GM12878 (cell line): ENCODE measurements at regions of chr2 and their contacts with region 1.

Region 1: GRCh38 chr2:74020702-74021406 is 36.1 kb downstream of the TET3 start:
- DNase-seq: no peak
- ATAC-seq: peak; percentile 67
- H3K4me3 ChIP-seq: no peak overlapping the region
- H3K27ac ChIP-seq: peak overlapping the region; percentile 76
- H3K4me1 ChIP-seq: peaks cover 32% of the 10 kb centered on the region
- H3K27me3 ChIP-seq: no peaks in the 10 kb centered on the region
- CTCF ChIP-seq: 0 out of 6 replicates have a peak, but pooled peaks of 1 of the 3 experiments have one; percentile 0
- EP300 ChIP-seq: peak in 1 of 2 experiments; percentile 32; a peak in 1 of 4 replicates
- POLR2A ChIP-seq: no peak
- RAD21 ChIP-seq: no peak

Region 2: DNA sequence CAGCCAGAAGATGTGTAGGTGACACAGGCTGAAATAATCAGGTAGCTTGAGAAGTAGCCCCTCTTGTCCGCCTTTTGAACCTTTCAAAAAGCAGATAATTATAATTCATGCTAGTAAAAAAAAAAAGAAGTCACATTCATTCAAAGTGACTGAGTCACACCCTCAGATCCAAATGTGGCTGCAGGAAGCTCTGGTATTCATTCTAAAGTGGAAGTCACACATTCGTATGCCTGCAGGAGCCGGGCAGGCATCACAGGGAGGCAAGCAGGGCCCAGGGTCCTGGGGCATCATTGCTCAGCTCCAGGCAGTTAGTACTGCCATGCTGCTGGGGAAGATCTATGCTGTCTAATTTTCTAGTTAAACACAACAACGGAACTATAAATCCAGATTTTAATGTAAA is 886.4 kb before region 1 on chr2:
- CTCF ChIA-PET with region 1: no interaction called
- POLR2A ChIA-PET with region 1: no interaction called
- RAD21 ChIA-PET with region 1: no interaction called
- SMC1A ChIA-PET with region 1: no interaction called
- in situ Hi-C with region 1: no loop called
- intact Hi-C with region 1: no loop called
- DNase-seq: no peak
- ATAC-seq: no peak
- H3K4me3 ChIP-seq: no peak overlapping the region
- H3K27ac ChIP-seq: no peak overlapping the region
- H3K4me1 ChIP-seq: no peaks in the 10 kb centered on the region
- H3K27me3 ChIP-seq: no peaks in the 10 kb centered on the region; a peak in 1 of 4 replicates
- CTCF ChIP-seq: no peak
- EP300 ChIP-seq: no peak
- POLR2A ChIP-seq: no peak
- RAD21 ChIP-seq: no peak

Region 3: DNA sequence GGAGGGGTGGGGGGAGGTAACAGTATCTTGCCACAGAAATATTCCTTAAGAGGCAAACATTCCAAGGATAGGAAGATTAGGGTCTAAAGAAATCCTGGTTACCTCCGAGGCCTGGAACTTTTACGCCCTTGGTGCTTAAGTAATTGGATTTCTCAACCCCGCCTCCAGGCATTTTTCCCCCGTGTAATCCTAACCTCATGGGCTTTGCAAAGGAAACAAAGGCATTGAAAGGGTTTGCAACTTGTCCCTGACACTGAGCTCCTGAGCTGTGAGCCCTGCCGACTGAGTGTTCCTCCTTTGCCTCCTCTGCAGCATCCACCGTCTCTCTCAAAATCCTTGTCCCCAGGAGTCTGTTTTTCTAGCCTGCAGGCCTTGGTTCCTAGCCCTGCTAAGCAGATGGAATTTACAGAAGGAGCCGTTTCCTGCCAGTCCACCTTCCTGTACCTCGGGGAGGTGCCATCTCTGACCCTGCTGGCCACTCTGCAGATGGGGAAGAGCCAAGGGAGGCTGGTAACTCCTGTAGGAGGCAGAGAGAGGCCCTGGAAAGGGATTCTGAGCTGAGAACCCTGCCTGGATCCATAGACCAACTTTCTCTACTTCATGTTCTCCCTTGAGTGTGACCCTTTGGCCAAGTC is 12.0 kb before region 1 on chr2:
- CTCF ChIA-PET with region 1: interaction called, 4 read pairs
- POLR2A ChIA-PET with region 1: interaction called, 7 read pairs
- RAD21 ChIA-PET with region 1: interaction called, 5 read pairs
- SMC1A ChIA-PET with region 1: interaction called, 11 read pairs
- in situ Hi-C with region 1: no loop called
- intact Hi-C with region 1: no loop called
- DNase-seq: no peak
- ATAC-seq: no peak
- H3K4me3 ChIP-seq: no peak overlapping the region
- H3K27ac ChIP-seq: no peak overlapping the region
- H3K4me1 ChIP-seq: no peaks in the 10 kb centered on the region
- H3K27me3 ChIP-seq: no peaks in the 10 kb centered on the region
- CTCF ChIP-seq: no peak
- EP300 ChIP-seq: no peak
- POLR2A ChIP-seq: no peak
- RAD21 ChIP-seq: no peak

Region 4: DNA sequence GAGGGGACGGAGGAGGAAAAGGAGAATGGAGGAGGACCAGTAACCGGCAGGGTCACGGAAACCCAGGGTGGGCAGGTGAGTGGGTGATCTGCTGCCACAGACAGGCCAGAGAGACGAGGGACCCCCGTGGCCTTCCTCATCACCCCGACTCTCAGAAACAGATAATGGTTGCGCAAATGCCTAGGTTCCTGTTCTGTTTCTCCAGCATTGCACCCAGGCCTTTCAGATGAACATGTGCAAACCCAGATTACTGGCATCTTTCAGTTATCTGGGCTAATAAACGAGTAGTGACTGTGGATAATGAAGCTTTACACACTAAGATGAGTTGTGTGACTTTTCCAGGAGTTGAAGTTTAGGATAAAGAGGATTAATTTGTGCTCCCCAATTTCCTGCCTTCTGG is 10.4 kb after region 1 on chr2:
- CTCF ChIA-PET with region 1: interaction called, 31 read pairs
- POLR2A ChIA-PET with region 1: interaction called, 68 read pairs
- RAD21 ChIA-PET with region 1: interaction called, 20 read pairs
- SMC1A ChIA-PET with region 1: interaction called, 94 read pairs
- in situ Hi-C with region 1: no loop called
- intact Hi-C with region 1: no loop called
- DNase-seq: no peak
- ATAC-seq: no peak
- H3K4me3 ChIP-seq: peak overlapping the region; percentile 73
- H3K27ac ChIP-seq: peak overlapping the region; percentile 73
- H3K4me1 ChIP-seq: peaks cover 65% of the 10 kb centered on the region
- H3K27me3 ChIP-seq: no peaks in the 10 kb centered on the region
- CTCF ChIP-seq: no peak
- EP300 ChIP-seq: no peak
- POLR2A ChIP-seq: no peak
- RAD21 ChIP-seq: no peak